Thyroid gland (tissue), 4 donors: ENCODE measurements at regions of chr3 and their contacts with region 1.

Region 1: GRCh38 chr3:126679318-126679751 is 24.4 kb upstream of the TXNRD3 start:
- DNase-seq: peak; percentile 89 to 90
- H3K4me3 ChIP-seq: no peak overlapping the region
- H3K27ac ChIP-seq: no peak overlapping the region
- H3K4me1 ChIP-seq: peaks cover 10 to 13% of the 10 kb centered on the region in 2 donors
- H3K27me3 ChIP-seq: no peaks in the 10 kb centered on the region
- CTCF ChIP-seq: peak; percentile 89 to 99 (median 94)
- POLR2A ChIP-seq: no peak

Region 2: GRCh38 chr3:126746395-126747177 is 67.3 kb after region 1 on chr3:
- intact Hi-C with region 1: loop called (anchors 5 kb)
- DNase-seq: peak; percentile 82 to 84
- H3K4me3 ChIP-seq: no peak overlapping the region
- H3K27ac ChIP-seq: peak overlapping the region; percentile 11 to 79 (median 71)
- H3K4me1 ChIP-seq: peaks cover 18 to 36% of the 10 kb centered on the region in 2 donors
- H3K27me3 ChIP-seq: no peaks in the 10 kb centered on the region
- CTCF ChIP-seq: peak in 4 of 6 experiments; percentile 33 to 47 (median 44)
- POLR2A ChIP-seq: no peak

Region 3: GRCh38 chr3:126758026-126758425 is 78.7 kb after region 1 on chr3:
- intact Hi-C with region 1: no loop called
- DNase-seq: no peak
- H3K4me3 ChIP-seq: no peak overlapping the region
- H3K27ac ChIP-seq: no peak overlapping the region
- H3K4me1 ChIP-seq: no peaks in the 10 kb centered on the region
- H3K27me3 ChIP-seq: no peaks in the 10 kb centered on the region
- CTCF ChIP-seq: no peak
- POLR2A ChIP-seq: no peak

Region 4: DNA sequence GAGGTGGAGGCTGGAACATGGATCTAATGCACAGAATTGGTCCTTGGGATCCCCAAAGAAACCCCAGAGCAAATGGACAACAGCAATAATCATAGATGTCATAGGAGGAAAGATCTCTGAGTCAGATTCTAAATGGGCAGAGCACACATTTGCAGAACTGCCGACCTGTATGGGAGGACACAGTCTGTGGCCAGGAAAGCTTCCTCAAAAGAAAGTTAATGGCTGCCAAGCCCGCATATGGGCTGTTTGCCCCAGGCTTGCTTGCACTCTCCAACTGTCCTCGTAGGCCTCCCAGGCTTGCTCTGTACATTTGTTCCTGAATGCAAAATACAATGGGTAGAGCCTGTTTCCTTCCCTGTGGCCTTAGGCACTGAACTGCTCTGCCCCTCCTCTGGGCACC is 201.6 kb after region 1 on chr3:
- intact Hi-C with region 1: no loop called
- DNase-seq: no peak
- H3K4me3 ChIP-seq: no peak overlapping the region
- H3K27ac ChIP-seq: no peak overlapping the region
- H3K4me1 ChIP-seq: no peaks in the 10 kb centered on the region
- H3K27me3 ChIP-seq: no peaks in the 10 kb centered on the region
- CTCF ChIP-seq: no peak
- POLR2A ChIP-seq: no peak

Region 5: DNA sequence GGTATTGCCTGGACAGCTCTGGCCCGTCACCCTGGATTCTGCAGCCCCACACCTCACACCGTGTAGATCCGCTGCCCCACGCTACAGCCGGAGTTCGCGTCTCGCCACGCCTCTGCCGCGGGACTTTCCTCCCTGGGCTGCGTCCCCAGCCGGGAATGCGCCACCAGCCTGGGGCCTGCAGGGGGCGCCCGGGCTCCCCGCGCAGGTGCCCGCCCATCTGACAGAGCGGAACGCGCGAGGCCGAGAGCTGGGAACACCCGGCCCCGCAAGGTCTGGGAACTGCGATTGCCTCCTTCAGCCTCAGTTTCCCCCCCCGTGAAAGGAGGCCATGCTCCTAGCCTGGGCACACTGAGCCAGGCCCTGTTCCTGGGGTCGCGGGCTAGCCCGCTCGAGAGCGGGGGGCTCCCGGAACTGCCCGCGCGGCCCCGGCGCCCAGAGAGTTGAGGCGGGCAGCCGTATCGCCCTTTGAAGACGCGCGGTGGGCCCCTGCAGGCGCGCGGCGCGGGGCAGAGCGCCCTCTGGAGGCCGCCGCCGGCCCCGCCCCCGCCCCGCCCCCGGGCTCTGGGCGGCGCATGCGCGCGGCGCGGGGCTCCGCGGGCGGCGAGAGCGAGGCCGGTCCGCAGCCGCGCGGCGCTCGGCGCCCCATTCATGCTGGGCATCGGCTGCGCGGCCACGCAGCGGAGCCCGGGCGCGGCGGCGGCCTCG is 303.3 kb after region 1 on chr3 and contains the start of gene PLXNA1:
- intact Hi-C with region 1: loop called (anchors 5 kb)
- DNase-seq: peak; percentile 64 to 66
- H3K4me3 ChIP-seq: peak within 1 kb of the TSS; percentile 62 to 78 (median 68)
- H3K27ac ChIP-seq: peak within 1 kb of the TSS in 2 of 3 donors; percentile 62 to 75
- H3K4me1 ChIP-seq: peaks cover 14 to 40% of the 10 kb centered on the region in 2 donors
- H3K27me3 ChIP-seq: no peaks in the 10 kb centered on the region
- CTCF ChIP-seq: peak; percentile 60 to 84 (median 78)
- POLR2A ChIP-seq: peak in 1 of 2 donors; percentile 56
- total RNA-seq, gene PLXNA1: 16.0 to 28.0 (median 22.8) TPM

Region 6: DNA sequence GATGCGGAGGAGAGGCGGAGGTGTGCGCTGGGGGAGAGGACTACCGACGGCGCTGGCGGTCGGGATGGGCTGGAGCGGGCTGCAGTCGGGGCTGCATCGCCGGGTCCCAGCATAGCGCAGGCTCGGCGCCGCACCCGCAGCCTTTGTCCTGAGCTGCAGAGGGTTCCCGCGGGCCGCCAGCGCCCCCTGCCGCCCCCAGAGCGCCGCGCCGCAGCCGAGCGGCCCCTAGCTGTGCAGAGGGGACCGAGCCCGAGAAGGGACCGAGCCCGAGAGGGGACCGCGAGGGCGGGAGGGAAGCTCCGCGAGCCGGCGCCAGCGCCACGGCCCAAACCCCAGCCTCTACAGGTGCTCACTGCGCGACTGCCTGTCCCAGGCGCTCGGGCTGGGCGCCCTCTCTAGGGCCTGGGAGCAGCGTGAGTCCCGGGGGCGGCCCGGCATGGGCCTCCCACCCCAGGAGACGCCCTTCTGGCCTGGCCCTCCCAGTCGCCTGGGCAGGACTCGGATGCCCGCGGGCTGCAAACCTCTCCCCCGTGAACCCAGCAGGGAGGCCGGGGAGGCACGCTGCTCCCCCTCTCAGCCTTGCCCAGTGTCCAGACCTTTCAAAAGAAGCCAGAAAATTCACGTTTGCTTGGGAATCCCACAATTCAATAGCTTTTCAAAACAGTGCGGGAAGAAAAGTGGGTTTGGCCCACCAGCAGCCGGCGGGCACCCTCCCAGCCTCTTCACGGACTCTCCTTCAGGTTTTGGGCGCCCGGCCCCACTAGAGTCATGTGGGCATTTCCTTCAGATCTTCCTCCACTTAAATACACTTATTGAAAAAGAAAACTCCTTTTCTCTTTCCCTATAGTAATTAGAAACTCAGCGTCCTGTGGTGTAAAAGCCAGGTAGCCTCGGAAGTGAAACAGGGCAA is 776.5 kb after region 1 on chr3:
- intact Hi-C with region 1: loop called (anchors 5 kb)
- DNase-seq: peak; percentile 73 to 74
- H3K4me3 ChIP-seq: no peak overlapping the region
- H3K27ac ChIP-seq: no peak overlapping the region
- H3K4me1 ChIP-seq: peaks cover 4 to 22% of the 10 kb centered on the region in 2 donors
- H3K27me3 ChIP-seq: peaks cover 17% of the 10 kb centered on the region
- CTCF ChIP-seq: peak; percentile 53 to 97 (median 91)
- POLR2A ChIP-seq: no peak

Region 7: GRCh38 chr3:127544192-127544802 is 865.0 kb after region 1 on chr3:
- intact Hi-C with region 1: loop called (anchors 10 kb)
- DNase-seq: peak; percentile 69 to 74
- H3K4me3 ChIP-seq: no peak overlapping the region
- H3K27ac ChIP-seq: no peak overlapping the region
- H3K4me1 ChIP-seq: peaks cover 10 to 23% of the 10 kb centered on the region in 2 donors
- H3K27me3 ChIP-seq: no peaks in the 10 kb centered on the region
- CTCF ChIP-seq: peak; percentile 49 to 85 (median 64)
- POLR2A ChIP-seq: no peak